ENCODE measurements at regions of chr14 and their contacts with region 1.

Region 1: GRCh38 chr14:34629657-34630529 is at the start of gene SNX6:
- DNase-seq: peak; percentile 66
- H3K4me3 ChIP-seq: peak within 1 kb of the TSS; percentile 80 to 98 (median 80)
- H3K27ac ChIP-seq: peak within 1 kb of the TSS; percentile 77
- H3K4me1 ChIP-seq: no peaks in the 10 kb centered on the region
- H3K27me3 ChIP-seq: no peaks in the 10 kb centered on the region
- CTCF ChIP-seq: no peak
- total RNA-seq, gene SNX6: 81.2 to 98.4 TPM

Region 2: GRCh38 chr14:33848706-33849454 is 781.0 kb before region 1 on chr14:
- CTCF ChIA-PET with region 1: no interaction called
- dilution Hi-C with region 1: no loop called
- in situ Hi-C with region 1: no loop called
- intact Hi-C with region 1: no loop called
- DNase-seq: peak; percentile 63
- H3K4me3 ChIP-seq: no peak overlapping the region
- H3K27ac ChIP-seq: no peak overlapping the region
- H3K4me1 ChIP-seq: no peaks in the 10 kb centered on the region
- H3K27me3 ChIP-seq: no peaks in the 10 kb centered on the region
- CTCF ChIP-seq: peak; percentile 78 to 85

Region 3: GRCh38 chr14:34650421-34651216 is 20.7 kb after region 1 on chr14:
- CTCF ChIA-PET with region 1: no interaction called
- dilution Hi-C with region 1: no loop called
- in situ Hi-C with region 1: no loop called
- intact Hi-C with region 1: loop called (anchors 2 kb)
- DNase-seq: peak; percentile 94
- H3K4me3 ChIP-seq: no peak overlapping the region
- H3K27ac ChIP-seq: peak overlapping the region; percentile 60
- H3K4me1 ChIP-seq: peaks cover 24% of the 10 kb centered on the region
- H3K27me3 ChIP-seq: no peaks in the 10 kb centered on the region
- CTCF ChIP-seq: no peak

Measured in mammary epithelial cell (primary cell).